ENCODE measurements at regions of chr6 and their contacts with region 1.

Region 1: DNA sequence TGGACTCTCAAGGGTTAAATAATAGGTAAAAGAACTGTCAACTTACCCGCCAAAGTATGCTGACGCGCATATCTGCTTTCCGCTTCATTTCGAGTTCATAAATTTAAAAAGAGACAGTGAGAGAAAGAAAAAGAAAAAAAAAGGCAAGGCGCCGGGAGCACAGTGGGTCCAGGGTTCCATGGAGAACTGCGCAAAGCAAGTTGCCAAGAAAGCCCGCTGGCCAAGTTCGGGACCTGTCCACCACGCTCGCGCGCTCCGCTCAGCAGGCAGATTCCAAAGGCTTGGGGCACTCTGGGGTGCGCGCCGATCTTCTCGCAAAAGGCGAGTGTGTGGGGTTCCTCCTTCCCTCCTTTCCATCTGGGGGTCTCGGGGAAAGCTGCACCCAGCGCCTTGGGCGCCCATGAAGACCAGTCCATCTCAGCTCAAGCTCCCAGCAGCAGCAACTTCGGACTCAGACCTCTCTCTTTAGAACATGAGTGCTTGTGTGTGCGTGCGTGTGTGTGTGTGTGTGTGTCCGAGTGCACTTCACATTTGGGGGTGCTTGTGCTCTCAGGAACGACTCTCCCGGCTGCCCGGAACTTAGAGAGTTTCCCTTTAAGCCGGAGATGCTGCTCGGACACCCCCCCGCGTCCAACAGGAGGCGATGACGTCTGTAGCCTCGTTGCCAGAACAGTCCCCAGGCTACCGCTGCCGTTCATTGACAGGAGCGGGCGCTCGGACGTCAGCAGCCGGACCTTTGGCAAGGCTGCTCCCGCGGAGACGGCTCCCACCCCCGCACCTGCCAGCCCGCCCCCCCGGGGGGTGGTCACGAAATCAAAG is 180.0 kb downstream of the TBXT start:
- DNase-seq: peak; percentile 94 to 98 (median 97)
- H3K4me3 ChIP-seq: peak overlapping the region; percentile 67
- H3K27ac ChIP-seq: peak overlapping the region; percentile 68 to 83
- H3K4me1 ChIP-seq: peaks cover 7% of the 10 kb centered on the region
- H3K27me3 ChIP-seq: no peaks in the 10 kb centered on the region
- CTCF ChIP-seq: no peak
- EP300 ChIP-seq: peak; percentile 71
- POLR2A ChIP-seq: peak; percentile 67

Region 2: DNA sequence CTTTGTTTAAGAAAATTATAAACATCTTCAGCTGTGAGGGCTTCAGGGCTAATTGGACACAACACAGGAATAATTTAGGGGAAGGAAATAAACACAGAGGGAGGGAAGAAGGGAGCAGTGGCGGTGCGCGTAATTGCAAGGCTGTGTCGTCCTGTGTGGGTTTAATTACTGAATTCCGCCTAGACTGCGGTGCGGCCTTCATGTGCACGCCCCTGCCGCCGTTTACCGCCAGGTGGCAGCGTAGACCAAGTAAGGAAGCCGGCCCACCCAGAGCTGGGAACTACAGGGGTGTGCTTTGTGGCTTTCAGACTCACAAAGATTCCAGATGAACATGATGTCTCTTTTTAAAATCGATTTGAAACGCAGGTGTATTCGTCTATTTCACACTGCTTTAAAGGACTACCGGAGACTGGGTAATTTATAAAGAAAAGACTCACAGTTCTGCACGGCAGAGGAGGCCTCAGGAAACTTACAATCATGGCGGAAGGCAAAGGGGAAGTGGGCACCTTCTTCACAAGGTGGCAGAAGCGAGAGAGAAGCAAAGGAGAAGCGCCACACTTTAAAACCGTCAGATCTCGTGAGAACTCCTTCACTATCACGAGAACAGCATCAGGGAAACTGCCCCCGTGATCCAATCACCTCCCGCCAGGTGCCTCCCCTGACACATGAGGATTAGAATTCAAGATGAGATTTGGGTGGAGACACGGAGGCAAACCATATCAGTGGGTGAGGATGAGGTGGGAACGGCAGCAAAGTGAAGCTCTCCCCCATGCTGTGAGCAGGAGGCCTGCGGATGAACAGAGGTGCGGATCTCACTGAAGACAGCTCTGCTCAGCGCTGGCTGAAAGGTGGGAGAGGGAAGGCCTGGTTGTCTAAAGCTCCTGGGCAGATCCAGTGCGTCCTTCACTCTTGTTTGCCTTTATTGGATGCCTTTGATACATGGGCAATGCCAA is 102.6 kb before region 1 on chr6:
- intact Hi-C with region 1: loop called in 1 of 4 experiments (anchors 10 kb)
- DNase-seq: peak; percentile 76 to 93 (median 90)
- H3K4me3 ChIP-seq: no peak overlapping the region
- H3K27ac ChIP-seq: no peak overlapping the region
- H3K4me1 ChIP-seq: no peaks in the 10 kb centered on the region
- H3K27me3 ChIP-seq: no peaks in the 10 kb centered on the region
- CTCF ChIP-seq: peak; percentile 55 to 93 (median 92)
- EP300 ChIP-seq: no peak
- POLR2A ChIP-seq: peak; percentile 11

Region 3: DNA sequence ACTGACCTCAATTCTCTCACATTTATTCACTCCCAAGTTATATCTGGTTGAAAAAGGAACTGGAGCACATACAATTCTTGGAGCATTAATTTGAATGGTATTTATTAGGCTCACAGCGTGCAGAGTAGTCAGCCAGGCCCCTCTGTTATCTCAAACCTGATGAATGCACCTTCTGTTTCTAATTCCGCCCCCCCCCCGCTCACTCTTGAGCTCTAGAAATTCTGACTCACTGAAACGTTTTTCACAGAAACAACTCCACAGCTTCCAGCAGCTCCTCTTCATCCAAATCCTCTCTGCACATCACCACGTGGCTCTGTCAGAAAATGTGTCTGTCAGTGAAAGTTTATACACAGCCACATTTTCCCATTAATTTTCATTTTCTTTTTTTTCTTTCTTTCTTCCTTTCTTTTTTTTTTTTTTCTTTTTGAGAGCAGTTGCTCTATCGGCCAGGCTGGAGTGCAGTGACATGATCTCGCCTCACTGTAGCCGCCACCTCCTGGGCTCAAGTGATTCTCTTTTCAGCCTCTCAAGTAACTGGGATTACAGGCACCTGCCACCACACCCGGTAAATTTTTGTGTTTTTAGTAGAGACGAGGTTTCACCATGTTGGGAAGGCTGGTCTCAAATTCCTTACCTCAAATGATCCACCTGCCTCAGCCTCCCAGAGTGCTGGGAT is 70.5 kb after region 1 on chr6:
- intact Hi-C with region 1: loop called in 1 of 4 experiments (anchors 5 kb)
- DNase-seq: peak; percentile 66 to 84 (median 77)
- H3K4me3 ChIP-seq: no peak overlapping the region
- H3K27ac ChIP-seq: peak overlapping the region in 1 of 2 donors; percentile 72
- H3K4me1 ChIP-seq: peaks cover 2% of the 10 kb centered on the region
- H3K27me3 ChIP-seq: no peaks in the 10 kb centered on the region
- CTCF ChIP-seq: no peak
- EP300 ChIP-seq: no peak
- POLR2A ChIP-seq: no peak

Region 4: DNA sequence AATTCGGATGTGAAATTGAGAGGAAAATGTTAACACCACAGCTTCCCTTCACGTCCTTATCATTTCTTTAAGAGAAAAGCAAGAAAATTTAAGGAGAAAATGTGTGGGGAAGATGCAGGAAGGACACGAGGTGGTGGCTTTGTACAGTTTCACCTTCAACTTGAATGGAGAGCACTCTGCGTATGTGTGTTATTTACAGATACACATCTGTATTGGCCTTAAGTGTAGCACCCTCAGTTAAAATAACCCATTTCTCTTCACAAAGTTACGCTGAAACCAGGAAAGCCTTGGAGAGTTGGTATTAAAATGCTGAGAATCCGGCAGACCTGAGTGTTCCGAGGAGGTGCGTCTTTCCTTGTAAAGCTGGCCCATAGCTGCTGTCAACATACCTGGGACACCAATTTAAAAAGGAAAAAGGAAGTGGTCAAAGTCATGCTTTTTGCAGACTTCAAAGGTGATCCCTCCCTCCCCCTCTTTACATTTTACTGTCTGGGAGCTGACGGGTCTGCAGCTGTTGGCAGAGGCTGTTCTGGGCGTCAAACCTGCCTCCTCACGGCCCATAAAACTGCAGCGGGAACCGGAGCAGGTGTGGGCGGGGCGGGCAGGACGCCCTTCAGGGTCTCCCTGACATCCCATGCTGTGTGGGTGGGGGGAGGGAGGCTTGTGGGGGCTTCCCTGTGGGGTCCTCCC is 241.3 kb after region 1 on chr6:
- intact Hi-C with region 1: no loop called
- DNase-seq: no peak
- H3K4me3 ChIP-seq: no peak overlapping the region
- H3K27ac ChIP-seq: no peak overlapping the region
- H3K4me1 ChIP-seq: no peaks in the 10 kb centered on the region
- H3K27me3 ChIP-seq: no peaks in the 10 kb centered on the region
- CTCF ChIP-seq: no peak
- EP300 ChIP-seq: no peak
- POLR2A ChIP-seq: no peak